ENCODE measurements at regions of chr14 and their contacts with region 1.

Region 1: GRCh38 chr14:22265319-22266137 is 323.5 kb downstream of the DAD1 start:
- DNase-seq: peak; percentile 41 to 62 (median 60)
- H3K4me3 ChIP-seq: peak overlapping the region in 1 of 7 experiments; percentile 3
- H3K27ac ChIP-seq: no peak overlapping the region
- H3K4me1 ChIP-seq: peaks cover 3 to 19% (median 7%) of the 10 kb centered on the region in 4 experiments
- H3K27me3 ChIP-seq: no peaks in the 10 kb centered on the region

Region 2: GRCh38 chr14:22252686-22253085 is 12.8 kb before region 1 on chr14:
- CTCF ChIA-PET with region 1: interaction called, 11 read pairs
- POLR2A ChIA-PET with region 1: no interaction called
- DNase-seq: peak; percentile 61 to 92 (median 87)
- H3K4me3 ChIP-seq: peak overlapping the region in 2 of 7 experiments; percentile 38 to 45
- H3K27ac ChIP-seq: peak overlapping the region; percentile 18 to 38
- H3K4me1 ChIP-seq: peaks cover 5 to 7% (median 6%) of the 10 kb centered on the region in 4 experiments
- H3K27me3 ChIP-seq: no peaks in the 10 kb centered on the region

Region 3: DNA sequence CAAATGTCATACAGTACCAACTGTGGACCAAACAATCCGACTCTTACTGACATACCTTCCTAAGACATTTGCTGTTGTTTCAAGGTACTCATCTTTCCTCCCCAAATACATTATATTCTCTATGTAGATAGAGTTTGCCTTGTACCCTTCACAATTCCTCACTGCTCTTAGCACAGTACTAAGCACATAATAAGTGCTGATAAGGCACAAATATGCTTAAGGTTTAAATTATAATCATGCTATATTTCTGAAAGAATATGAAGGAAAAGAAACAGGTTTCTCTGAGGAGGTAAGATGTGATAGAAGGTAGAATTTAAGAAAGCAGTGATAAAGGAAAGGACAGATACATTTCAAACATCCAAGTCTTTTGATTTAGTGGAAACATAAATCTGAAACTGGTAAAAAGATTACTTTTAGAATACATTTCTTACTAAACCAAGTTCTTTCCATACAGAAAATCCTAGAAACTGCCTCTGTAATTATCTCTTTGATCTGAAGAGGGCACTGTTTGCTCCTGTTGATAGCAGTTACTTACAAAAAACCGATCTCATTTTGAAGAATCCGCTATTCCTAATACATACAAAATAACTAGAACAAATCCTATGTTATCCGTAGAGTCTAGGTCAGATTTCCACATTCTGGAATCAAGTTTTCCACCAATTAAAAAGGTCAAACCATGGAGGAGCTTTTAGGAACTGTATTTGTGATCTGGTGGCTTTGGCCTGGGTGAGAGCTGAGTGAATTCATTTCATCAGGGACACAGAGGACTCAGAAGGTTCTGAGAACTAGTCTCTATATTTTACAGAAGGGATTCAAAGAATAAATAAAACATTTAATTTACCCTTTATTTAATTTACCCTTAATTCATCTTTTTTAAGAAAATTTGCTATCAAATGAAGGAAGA is 11.6 kb after region 1 on chr14:
- CTCF ChIA-PET with region 1: interaction called, 20 read pairs
- POLR2A ChIA-PET with region 1: no interaction called
- DNase-seq: peak; percentile 29 to 49 (median 37)
- H3K4me3 ChIP-seq: no peak overlapping the region
- H3K27ac ChIP-seq: no peak overlapping the region
- H3K4me1 ChIP-seq: peaks cover 0 to 16% (median 12%) of the 10 kb centered on the region in 4 experiments
- H3K27me3 ChIP-seq: no peaks in the 10 kb centered on the region